MCF 10A (cell line): ENCODE measurements at regions of chr3 and their contacts with region 1.

Region 1: GRCh38 chr3:157572559-157573270 is 69.5 kb upstream of the VEPH1 start:
- DNase-seq: peak; percentile 72
- H3K4me3 Mint-ChIP-seq: no peak overlapping the region
- H3K27ac Mint-ChIP-seq: no peak overlapping the region
- H3K4me1 Mint-ChIP-seq: peaks cover 11% of the 10 kb centered on the region
- H3K27me3 Mint-ChIP-seq: no peaks in the 10 kb centered on the region
- CTCF ChIP-seq: peak; percentile 63

Region 2: DNA sequence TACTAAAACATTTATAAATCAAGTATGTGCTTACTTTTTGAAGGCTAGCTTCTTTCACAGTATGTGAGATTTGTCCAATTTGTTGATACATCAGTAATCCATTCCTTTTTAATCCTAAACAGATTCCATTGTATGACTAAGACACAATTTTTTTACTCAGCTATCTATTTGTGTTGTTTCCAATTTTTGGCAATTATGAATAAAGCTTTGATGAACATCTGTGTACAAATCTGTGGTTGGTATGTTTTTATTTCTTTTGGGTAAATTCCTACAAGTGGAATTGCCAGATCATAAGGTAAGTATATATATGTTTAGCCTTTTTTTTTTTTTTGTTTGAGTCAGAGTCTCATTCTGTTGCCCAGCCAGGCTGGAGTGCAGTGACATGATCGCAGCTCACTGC is 13.3 kb before region 1 on chr3:
- CTCF ChIA-PET with region 1: interaction called, 10 read pairs
- POLR2A ChIA-PET with region 1: interaction called, 3 read pairs
- intact Hi-C with region 1: no loop called
- DNase-seq: no peak
- H3K4me3 Mint-ChIP-seq: no peak overlapping the region
- H3K27ac Mint-ChIP-seq: no peak overlapping the region
- H3K4me1 Mint-ChIP-seq: no peaks in the 10 kb centered on the region
- H3K27me3 Mint-ChIP-seq: no peaks in the 10 kb centered on the region
- CTCF ChIP-seq: no peak

Region 3: GRCh38 chr3:157585386-157585785 is 12.7 kb after region 1 on chr3:
- CTCF ChIA-PET with region 1: interaction called, 14 read pairs
- POLR2A ChIA-PET with region 1: interaction called, 3 read pairs
- intact Hi-C with region 1: no loop called
- DNase-seq: no peak
- H3K4me3 Mint-ChIP-seq: no peak overlapping the region
- H3K27ac Mint-ChIP-seq: no peak overlapping the region
- H3K4me1 Mint-ChIP-seq: no peaks in the 10 kb centered on the region
- H3K27me3 Mint-ChIP-seq: peaks cover 3% of the 10 kb centered on the region
- CTCF ChIP-seq: no peak

Region 4: DNA sequence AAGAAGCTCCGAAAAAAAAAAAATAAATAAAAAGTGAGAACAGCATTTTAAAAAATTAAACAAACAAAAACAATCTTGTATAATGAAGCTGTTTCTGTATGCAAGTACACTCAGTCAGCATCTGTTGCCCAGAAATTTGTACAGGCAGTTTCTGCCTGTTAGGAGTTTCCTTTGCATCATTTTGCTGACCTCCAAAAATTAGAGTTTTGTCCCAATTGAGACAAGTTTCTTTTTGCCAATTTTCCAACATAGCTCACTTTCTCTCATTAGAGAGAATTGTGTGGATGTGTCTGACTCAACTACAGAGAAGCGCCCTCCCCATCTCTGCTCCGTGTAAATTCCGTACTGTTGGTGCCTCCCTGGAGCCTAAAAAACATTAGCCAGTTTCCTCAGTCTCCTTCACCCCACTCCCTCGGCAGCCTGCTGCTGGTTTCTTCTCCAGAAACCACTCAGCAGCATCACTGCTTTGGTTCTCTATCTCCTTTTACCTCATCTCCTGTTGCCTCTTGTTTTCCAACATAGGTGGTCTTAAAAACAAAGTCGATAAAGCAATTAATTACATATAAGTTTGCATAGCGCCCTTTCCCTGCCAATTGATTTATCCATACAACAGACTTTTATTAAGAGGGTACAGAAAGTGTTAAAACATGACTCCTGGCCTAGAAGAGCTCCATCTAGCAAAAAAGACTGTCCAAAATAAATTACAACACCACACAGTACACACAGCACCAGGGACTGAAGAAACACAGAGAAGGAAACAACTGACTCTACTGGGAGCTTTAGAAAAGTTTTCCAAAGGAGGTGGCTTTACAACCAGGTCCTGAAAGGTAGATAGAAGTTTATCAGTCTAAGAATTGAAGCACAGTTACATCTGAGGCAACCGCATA is 246.8 kb after region 1 on chr3:
- CTCF ChIA-PET with region 1: no interaction called
- POLR2A ChIA-PET with region 1: no interaction called
- intact Hi-C with region 1: no loop called
- DNase-seq: no peak
- H3K4me3 Mint-ChIP-seq: no peak overlapping the region
- H3K27ac Mint-ChIP-seq: no peak overlapping the region
- H3K4me1 Mint-ChIP-seq: no peaks in the 10 kb centered on the region
- H3K27me3 Mint-ChIP-seq: no peaks in the 10 kb centered on the region
- CTCF ChIP-seq: no peak